ENCODE measurements at regions of chr9 and their contacts with region 1.

Region 1: GRCh38 chr9:19782005-19782404 is 6.8 kb downstream of the SLC24A2 start:
- DNase-seq: peak; percentile 21

Region 2: GRCh38 chr9:19895006-19895405 is 113.0 kb after region 1 on chr9:
- in situ Hi-C with region 1: loop called (anchors 25 kb)
- DNase-seq: no peak